ENCODE measurements at regions of chr4 and their contacts with region 1.

Region 1: GRCh38 chr4:158856852-158857251 is 88.0 kb downstream of the FNIP2 start:
- DNase-seq: peak; percentile 33

Region 2: DNA sequence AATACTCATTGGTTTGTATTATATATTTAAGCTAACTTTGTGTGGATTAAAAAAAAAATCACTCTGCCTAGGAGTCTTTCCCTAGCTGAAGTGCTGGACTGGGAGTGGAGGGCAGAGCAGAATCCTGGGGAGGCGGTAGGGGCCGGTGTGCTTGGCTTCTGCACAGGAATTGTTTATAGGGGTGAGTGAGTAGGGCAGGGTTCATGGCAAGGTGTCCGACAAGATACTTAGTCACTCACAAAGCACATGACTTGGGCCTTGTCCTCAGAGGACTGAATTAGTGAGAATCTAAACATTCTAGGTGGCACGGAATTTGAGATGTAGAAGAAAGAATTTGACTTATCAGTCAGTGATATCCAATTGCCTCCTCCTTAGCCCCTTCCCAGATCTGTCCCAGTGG is 55.8 kb before region 1 on chr4:
- CTCF ChIA-PET with region 1: no interaction called
- POLR2A ChIA-PET with region 1: no interaction called
- DNase-seq: no peak

Region 3: GRCh38 chr4:159010563-159011260 is 153.9 kb after region 1 on chr4:
- CTCF ChIA-PET with region 1: no interaction called
- POLR2A ChIA-PET with region 1: no interaction called
- DNase-seq: no peak

Region 4: DNA sequence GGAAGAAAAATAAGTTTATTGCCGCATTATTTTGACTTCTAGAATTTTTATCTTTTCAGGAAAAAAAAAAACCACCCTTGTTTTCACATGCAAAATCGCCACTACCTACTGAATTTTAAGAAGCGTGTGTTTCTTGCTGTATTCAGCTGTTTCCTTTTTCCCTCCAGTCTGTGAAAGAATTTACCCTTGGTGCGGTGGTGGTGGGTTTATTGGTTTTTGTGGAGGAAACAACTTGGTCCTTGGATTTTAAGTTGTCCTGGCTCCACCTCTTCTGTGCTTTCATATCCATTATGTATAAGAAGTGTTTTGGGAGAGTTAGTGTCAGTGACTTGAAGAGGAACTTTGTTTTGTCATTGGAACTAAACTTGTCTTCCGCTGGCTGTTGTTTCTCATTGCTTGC is 254.1 kb after region 1 on chr4:
- CTCF ChIA-PET with region 1: no interaction called
- POLR2A ChIA-PET with region 1: no interaction called
- DNase-seq: no peak

Region 5: DNA sequence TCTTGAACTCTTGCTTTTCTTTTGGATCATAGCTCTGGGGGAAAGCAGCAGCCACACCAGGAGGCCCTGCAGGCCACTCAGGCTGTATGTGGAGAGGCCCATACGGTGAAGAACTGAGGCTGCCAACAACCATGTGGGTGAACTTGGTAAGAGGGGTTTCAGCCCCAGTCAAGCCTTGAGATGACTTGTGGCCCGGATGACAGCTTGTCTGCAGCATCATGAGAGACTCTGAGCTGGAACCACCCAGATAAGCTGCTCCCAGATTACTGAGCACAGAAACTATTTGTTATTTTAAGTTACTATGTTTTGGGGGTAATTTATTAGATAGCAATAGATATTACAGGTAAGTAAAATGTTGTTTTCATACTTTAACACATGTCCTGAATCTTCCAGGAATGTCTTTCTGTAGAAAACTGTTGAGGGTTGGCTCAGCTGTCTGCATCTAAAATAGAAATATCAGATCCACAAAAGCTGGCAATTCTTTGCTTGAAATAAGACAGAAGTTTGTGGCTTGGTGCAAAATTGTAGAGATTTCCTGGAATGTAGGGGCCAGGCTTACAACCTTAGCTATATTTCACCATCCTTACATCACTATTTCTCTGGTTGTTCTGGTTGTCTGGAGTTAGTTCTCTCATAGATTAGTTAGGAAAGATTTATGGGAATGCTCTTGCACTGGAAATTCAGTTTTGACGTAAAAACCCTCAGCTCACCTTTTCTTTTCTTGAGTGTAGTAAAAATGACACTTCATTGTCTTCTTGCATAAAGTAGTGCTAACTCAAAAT is 518.1 kb after region 1 on chr4:
- CTCF ChIA-PET with region 1: interaction called, 12 read pairs
- POLR2A ChIA-PET with region 1: no interaction called
- DNase-seq: no peak

Measured in HEK293T (cell line).